Prostate gland (tissue), 2 donors: ENCODE measurements at regions of chr14 and their contacts with region 1.

Region 1: GRCh38 chr14:34059855-34060638 is 109.2 kb upstream of the EGLN3 start:
- DNase-seq: peak; percentile 72
- H3K4me3 ChIP-seq: peak overlapping the region; percentile 52 to 53
- H3K27ac ChIP-seq: peak overlapping the region; percentile 68 to 76
- H3K4me1 ChIP-seq: no peaks in the 10 kb centered on the region
- H3K27me3 ChIP-seq: no peaks in the 10 kb centered on the region
- CTCF ChIP-seq: peak in 2 of 4 experiments; percentile 44 to 47
- POLR2A ChIP-seq: peak; percentile 76

Region 2: DNA sequence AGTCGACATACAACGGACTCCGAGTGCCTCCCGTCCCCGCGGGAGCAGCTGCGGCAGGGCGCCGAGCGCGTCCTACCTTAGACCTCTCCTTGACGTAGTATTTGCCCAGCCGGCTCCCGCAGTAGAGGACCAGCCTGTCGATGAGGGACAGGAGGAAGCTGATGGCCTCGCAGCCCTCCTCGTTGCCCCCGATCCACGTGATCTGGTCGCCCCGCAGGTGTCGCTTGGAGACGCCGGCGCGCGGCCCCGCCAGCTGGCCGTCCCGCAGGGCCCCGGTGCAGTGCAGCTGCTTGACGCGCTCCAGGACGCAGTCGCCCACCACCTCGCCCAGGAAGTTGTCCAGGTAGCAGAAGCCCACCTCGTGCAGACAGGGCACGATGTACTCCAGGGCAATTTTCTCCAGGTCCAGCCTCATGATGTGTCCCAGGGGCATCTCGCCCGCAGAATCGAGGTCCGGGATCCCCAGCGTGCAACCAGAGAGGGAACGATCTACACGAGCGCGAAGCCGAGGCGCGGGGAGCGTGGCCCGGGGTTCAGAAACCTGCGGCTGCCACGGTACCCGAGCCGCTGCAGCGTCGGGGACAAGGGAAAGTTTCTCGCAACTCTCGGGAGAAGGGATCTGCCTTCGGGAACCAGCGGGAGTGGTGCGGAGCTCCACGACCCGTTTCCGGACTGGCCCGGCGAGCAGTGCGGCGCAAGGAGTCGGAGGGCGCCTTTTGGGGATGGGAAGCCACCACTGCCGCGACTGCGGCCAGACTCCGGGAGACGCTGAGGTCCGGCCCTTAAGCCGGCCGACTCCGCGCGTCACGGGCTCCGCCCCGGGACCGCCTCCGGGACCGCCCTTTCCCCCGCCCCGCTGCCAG is 109.5 kb before region 1 on chr14 and contains the start of gene EGLN3:
- intact Hi-C with region 1: loop called (anchors 5 kb)
- DNase-seq: peak; percentile 90
- H3K4me3 ChIP-seq: peak within 1 kb of the TSS; percentile 33 to 39
- H3K27ac ChIP-seq: peak within 1 kb of the TSS; percentile 15 to 20
- H3K4me1 ChIP-seq: peaks cover 5% of the 10 kb centered on the region
- H3K27me3 ChIP-seq: no peaks in the 10 kb centered on the region
- CTCF ChIP-seq: no peak
- POLR2A ChIP-seq: peak; percentile 99
- total RNA-seq, gene EGLN3: 6.1 to 6.8 TPM

Region 3: DNA sequence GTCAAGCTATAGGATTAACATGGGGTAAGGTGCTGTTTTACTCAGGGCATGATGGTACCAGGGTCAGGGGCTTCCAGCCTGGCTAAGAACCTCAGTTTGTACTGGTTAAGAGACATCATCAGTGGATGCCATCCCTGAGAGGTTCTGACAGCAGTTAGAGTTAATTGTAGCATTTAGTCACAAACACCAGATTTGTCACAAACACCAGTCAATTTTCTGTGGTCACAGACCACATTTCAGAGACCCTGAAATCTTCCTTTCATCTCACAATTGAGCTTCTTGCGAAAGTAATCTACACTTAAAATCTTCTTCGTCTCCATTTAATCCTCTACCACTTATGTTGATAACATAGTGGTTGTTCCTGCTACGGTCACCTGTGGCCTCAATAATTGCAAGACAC is 33.8 kb after region 1 on chr14:
- intact Hi-C with region 1: no loop called
- DNase-seq: no peak
- H3K4me3 ChIP-seq: no peak overlapping the region
- H3K27ac ChIP-seq: no peak overlapping the region
- H3K4me1 ChIP-seq: no peaks in the 10 kb centered on the region
- H3K27me3 ChIP-seq: no peaks in the 10 kb centered on the region
- CTCF ChIP-seq: no peak
- POLR2A ChIP-seq: no peak

Region 4: DNA sequence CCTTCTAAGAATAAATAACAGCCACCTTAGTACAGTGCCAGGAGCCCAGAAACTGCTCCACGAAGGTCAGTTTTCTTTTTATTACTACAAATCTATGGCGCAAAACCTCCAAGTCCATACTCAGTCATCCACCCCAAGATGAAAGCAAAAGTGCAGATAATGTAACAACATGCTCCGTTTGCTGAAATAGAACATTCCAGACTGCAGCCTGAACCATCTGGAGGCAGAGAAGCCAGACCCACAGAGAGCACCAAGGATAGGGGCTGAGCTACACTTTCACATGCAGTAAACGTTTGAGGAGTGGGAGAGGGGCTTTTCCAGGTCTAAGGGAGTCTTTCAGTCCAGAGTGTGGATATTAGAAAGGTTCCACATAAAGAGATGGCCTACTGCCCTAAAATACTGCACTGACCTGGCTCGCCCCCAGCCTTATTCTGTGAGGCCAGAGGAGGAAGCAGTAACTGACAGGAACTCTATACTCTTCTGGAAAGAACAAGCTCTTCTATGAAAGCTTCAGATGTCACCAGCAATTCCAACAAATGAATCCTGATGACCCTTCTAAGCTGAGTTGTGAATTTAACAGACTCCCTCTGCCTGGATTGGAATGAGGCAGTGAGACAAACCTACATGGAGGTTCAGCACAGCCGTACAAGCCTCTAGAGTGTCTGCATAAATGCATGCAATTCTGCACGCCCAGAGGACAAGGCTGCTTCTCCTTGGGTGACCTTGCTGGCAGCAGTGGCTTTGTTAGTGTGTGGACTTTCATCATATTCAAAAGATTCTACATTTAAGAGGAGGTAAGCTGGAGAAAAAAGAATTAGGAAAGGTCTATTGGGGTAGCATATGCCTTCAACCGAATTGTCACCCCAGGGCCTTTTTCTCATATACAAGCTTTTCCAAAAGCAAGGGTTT is 44.7 kb after region 1 on chr14:
- intact Hi-C with region 1: no loop called
- DNase-seq: no peak
- H3K4me3 ChIP-seq: no peak overlapping the region
- H3K27ac ChIP-seq: no peak overlapping the region
- H3K4me1 ChIP-seq: no peaks in the 10 kb centered on the region
- H3K27me3 ChIP-seq: no peaks in the 10 kb centered on the region
- CTCF ChIP-seq: no peak
- POLR2A ChIP-seq: no peak